Activated T-helper 2 cell treated with anti-CD3 and anti-CD28 coated beads, Interferon-gamma antibody, Interleukin-2, Interleukin-4, amounts not matched to agents 10 μg/mL and 5 μg/mL and 100 μg/mL, durations not matched to agents 14 hours and 24 hours and 36 hours (primary cell): ENCODE measurements at regions of chr17 and their contacts with region 1.

Region 1: DNA sequence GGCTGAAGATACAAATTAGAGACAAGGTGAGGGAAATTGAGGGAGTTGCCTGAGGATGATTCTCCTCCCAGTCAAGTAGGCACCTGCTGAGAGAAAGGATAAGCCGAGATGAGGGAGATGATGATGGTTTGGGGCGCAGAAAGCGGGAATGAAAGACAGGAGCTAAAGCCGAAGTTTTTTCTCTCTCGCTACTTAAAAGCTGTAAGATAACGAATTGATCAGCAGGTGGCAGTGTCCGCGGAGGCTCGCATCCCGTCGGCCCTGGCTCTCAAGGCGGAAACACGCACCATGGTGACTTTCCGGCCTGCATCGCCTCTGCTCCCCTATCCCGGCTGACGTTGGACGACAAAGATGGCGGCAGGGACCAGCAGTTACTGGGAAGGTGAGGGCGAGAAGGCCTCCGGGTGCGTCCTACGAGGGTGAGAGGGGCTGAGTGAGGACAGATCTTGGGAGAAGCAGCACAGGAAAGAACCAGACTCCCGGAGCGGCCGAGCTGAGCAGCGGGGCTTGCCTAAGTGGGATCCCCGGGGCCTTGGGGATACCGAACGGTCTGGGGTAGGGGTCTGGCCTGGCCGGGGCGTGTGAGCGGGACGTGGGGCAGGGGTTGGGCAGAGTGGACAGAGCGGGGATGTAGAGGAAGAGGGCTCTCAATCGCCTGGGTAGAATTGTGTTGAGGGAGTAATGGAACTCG is at the start of gene GOSR1:
- DNase-seq: peak; percentile 89
- H3K4me3 Mint-ChIP-seq: peak within 1 kb of the TSS; percentile 95
- H3K27ac Mint-ChIP-seq: peak within 1 kb of the TSS; percentile 95
- H3K4me1 Mint-ChIP-seq: peaks cover 31% of the 10 kb centered on the region
- H3K27me3 Mint-ChIP-seq: no peaks in the 10 kb centered on the region
- total RNA-seq, gene GOSR1: 51.1 and 53.6 TPM in 2 replicates

Region 2: DNA sequence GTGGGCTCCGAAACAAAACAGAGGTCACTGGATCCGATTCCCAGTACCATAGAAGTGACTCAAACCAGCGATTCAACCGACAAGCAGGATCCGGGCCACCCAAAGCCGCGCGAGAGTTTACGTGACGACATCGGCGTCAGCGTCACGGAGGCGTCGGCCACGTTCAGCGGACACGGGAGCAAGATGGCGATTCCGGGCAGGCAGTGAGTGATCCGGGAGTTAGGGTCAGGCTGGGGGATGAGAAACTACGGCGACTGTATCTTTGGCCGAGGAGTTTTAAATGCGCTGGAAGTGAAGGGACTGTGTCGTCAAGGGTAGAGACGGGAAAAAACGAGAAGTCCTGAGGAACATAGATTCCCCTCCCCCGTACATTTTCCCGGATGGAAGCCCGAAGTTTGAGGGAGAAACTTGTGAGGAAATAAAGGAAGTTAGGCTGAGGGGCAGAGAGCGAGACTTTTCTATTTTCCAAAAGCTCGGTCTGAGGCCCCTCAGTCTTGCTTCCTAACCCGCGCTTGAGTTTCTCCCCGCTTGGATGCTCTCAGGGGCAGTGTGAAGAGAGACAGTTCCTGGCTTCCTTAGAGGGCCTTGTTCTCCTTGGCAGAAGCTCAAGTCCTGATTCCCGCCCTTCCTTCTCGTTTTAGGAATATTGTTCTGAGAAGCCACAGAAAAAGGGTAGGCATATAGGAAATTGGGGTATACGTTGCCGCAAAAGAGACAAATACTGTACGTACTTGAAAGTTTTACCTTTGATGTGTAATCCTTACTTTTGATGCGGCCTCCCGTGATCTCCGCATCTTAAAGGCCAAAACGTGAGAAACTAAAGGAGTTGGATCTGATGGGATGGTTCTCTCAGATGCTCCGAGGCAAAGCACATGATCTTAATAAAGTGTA is 360.3 kb before region 1 on chr17 and contains the start of gene NSRP1:
- intact Hi-C with region 1: loop called (anchors 10 kb)
- DNase-seq: peak; percentile 91
- H3K4me3 Mint-ChIP-seq: peak within 1 kb of the TSS; percentile 96
- H3K27ac Mint-ChIP-seq: peak within 1 kb of the TSS; percentile 98
- H3K4me1 Mint-ChIP-seq: peaks cover 59% of the 10 kb centered on the region
- H3K27me3 Mint-ChIP-seq: peaks cover under 1% of the 10 kb centered on the region
- total RNA-seq, gene NSRP1: 27.3 and 27.4 TPM in 2 replicates

Region 3: DNA sequence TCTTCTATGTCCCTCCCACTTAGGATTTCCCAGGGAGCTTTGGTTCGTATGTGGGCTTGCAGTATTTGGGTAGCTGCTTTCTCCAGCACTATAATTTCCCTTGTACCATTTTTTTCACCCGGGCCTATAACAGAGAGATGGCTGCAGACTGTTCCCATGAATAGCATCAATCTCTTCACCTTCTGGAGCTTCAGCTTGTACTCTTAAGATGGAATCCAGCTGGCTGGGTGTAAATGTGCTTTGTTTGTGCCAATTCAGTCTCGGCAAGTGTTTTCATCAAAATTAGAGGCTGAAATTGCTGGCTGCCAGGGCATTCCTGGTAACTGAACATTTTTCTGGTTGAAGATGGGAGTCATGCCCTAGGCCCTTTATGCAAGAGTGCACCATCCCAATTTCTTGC is 110.7 kb before region 1 on chr17:
- intact Hi-C with region 1: no loop called
- DNase-seq: no peak
- H3K4me3 Mint-ChIP-seq: no peak overlapping the region
- H3K27ac Mint-ChIP-seq: no peak overlapping the region
- H3K4me1 Mint-ChIP-seq: peaks cover 29% of the 10 kb centered on the region
- H3K27me3 Mint-ChIP-seq: peaks cover 4% of the 10 kb centered on the region

Region 4: DNA sequence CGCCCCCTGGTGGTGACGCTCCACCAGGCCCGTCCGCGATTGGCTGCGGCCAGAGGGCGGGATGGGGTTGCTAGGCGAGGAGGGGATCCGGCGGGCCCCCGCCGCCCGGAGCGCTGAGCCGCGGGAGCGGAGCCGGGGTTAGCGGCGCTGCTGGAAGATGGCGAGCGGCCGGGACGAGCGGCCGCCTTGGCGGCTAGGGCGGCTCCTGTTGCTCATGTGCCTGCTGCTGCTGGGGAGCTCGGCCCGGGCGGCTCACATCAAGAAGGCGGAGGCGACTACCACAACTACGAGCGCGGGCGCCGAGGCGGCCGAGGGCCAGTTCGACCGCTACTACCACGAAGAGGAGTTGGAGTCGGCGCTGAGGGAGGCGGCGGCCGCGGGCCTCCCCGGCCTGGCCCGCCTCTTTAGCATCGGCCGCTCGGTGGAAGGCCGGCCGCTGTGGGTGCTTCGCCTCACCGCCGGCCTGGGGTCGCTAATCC is 98.4 kb before region 1 on chr17 and contains the start of gene CPD:
- intact Hi-C with region 1: loop called (anchors 5 kb)
- DNase-seq: peak; percentile 95
- H3K4me3 Mint-ChIP-seq: peak within 1 kb of the TSS; percentile 85
- H3K27ac Mint-ChIP-seq: peak within 1 kb of the TSS; percentile 82
- H3K4me1 Mint-ChIP-seq: peaks cover 52% of the 10 kb centered on the region
- H3K27me3 Mint-ChIP-seq: peaks cover 3% of the 10 kb centered on the region
- total RNA-seq, gene CPD: 26.0 and 31.5 TPM in 2 replicates

Region 5: GRCh38 chr17:30554839-30555751 is 77.9 kb after region 1 on chr17:
- intact Hi-C with region 1: no loop called
- DNase-seq: no peak
- H3K4me3 Mint-ChIP-seq: no peak overlapping the region
- H3K27ac Mint-ChIP-seq: no peak overlapping the region
- H3K4me1 Mint-ChIP-seq: no peaks in the 10 kb centered on the region
- H3K27me3 Mint-ChIP-seq: no peaks in the 10 kb centered on the region

Region 6: GRCh38 chr17:30716461-30717300 is 239.5 kb after region 1 on chr17:
- intact Hi-C with region 1: loop called (anchors 10 kb)
- DNase-seq: no peak
- H3K4me3 Mint-ChIP-seq: no peak overlapping the region
- H3K27ac Mint-ChIP-seq: no peak overlapping the region
- H3K4me1 Mint-ChIP-seq: peaks cover 10% of the 10 kb centered on the region
- H3K27me3 Mint-ChIP-seq: peaks cover 3% of the 10 kb centered on the region